ENCODE measurements at regions of chr9 and their contacts with region 1.

Region 1: DNA sequence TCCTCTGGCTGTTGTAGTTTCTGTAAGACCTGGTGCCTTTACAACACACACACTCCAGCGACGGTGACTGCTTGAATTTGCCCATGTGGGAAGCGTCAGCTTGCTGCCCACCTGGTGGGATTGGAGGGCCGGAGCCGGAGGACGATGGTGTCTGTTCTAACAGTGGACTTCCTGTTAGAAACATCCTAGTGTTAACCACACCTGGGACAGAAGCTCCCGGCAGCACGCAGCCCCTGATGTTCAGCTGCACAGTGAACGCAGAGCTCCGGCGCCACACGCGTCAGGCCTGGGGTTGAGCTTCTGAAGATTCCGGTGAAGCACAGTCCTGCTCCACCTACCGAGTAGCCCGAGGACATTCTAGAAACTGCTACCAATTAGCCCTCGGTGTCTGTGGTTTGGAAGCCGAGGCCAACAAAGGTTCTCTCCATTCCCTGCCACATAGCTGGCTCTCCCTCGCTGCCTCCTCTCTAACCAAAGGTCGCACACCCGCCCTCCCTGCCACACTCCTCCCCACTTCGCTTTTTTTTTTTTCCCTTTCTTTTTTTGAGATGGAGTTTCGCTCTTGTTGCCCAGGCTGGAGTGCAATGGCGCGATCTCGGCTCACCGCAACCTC is 14.4 kb downstream of the PMPCA start:
- DNase-seq: no peak
- ATAC-seq: peak in 1 of 2 experiments; percentile 19; a peak in 3 of 6 replicates
- H3K4me3 ChIP-seq: no peak overlapping the region
- H3K27ac ChIP-seq: no peak overlapping the region
- H3K4me1 ChIP-seq: no peaks in the 10 kb centered on the region
- CTCF ChIP-seq: no peak
- EP300 ChIP-seq: no peak
- POLR2A ChIP-seq: no peak
- RAD21 ChIP-seq: no peak

Region 2: DNA sequence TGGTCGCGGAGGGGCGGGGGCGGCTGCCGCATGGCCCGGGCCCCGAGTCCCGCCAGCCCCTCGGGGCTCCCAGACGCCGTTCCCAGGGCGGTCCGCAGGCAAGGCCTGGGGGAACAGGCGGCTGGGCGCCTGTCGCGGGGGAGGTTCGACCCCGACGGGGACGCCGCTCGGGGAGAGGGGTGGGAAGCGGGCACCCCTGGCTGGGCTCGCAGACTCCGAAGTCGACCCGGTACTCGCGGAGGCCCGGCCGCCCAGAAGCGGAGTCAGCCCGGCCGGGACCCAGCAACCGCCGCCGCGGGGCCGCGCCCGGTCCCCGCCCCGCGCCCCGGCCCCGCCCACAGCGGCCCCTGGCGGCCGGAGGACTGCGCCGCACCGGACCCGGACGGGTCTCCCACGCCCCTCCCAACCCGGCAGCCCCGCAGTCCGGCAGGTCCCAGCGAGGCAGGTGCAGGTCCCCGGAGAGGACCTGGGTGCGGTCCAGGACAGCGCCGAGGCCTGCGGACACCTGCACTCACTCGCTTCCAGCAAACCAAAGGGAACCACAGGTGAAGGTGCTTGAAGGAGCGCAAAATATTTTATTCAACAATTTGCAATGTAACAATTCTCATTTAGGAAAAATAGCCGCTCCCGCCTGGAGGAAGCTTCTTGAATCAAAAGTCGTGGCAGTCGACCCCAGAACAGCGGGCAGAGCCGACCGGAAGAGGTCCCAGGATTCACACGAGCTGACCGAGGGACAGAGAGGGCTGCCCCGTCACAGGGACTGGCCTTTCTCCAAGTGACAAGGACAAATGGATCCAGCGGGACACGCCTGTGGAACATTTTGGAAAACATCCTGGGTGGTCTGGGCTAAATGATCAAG is 14.9 kb after region 1 on chr9 and contains the start of gene INPP5E:
- CTCF ChIA-PET with region 1: interaction called, 30 read pairs
- POLR2A ChIA-PET with region 1: no interaction called
- DNase-seq: peak; percentile 79 to 81
- ATAC-seq: peak; percentile 82
- H3K4me3 ChIP-seq: peak within 1 kb of the TSS; percentile 86
- H3K27ac ChIP-seq: peak within 1 kb of the TSS; percentile 91 to 99
- H3K4me1 ChIP-seq: peaks cover 17% of the 10 kb centered on the region
- CTCF ChIP-seq: peak; percentile 87
- EP300 ChIP-seq: no peak
- POLR2A ChIP-seq: peak; percentile 59
- RAD21 ChIP-seq: no peak
- polyA plus RNA-seq, gene INPP5E: 5.2 and 5.8 TPM in 2 replicates

Region 3: GRCh38 chr9:136467766-136468563 is 43.1 kb after region 1 on chr9:
- CTCF ChIA-PET with region 1: no interaction called
- POLR2A ChIA-PET with region 1: no interaction called
- DNase-seq: no peak
- ATAC-seq: no peak
- H3K4me3 ChIP-seq: no peak overlapping the region
- H3K27ac ChIP-seq: no peak overlapping the region
- H3K4me1 ChIP-seq: no peaks in the 10 kb centered on the region
- CTCF ChIP-seq: no peak
- EP300 ChIP-seq: no peak
- POLR2A ChIP-seq: no peak
- RAD21 ChIP-seq: no peak

Region 4: GRCh38 chr9:136539427-136540421 is 114.9 kb after region 1 on chr9:
- CTCF ChIA-PET with region 1: no interaction called
- POLR2A ChIA-PET with region 1: no interaction called
- DNase-seq: no peak
- ATAC-seq: no peak
- H3K4me3 ChIP-seq: no peak overlapping the region
- H3K27ac ChIP-seq: no peak overlapping the region
- H3K4me1 ChIP-seq: peaks cover 16% of the 10 kb centered on the region; the same call in 2 of the 3 replicates
- CTCF ChIP-seq: no peak
- EP300 ChIP-seq: no peak
- POLR2A ChIP-seq: no peak
- RAD21 ChIP-seq: no peak